ENCODE measurements at regions of chr5 and their contacts with region 1.

Region 1: GRCh38 chr5:168340487-168340886 is 49.0 kb downstream of the WWC1 start:
- DNase-seq: no peak
- H3K4me3 Mint-ChIP-seq: no peak overlapping the region
- H3K27ac Mint-ChIP-seq: no peak overlapping the region
- H3K4me1 Mint-ChIP-seq: no peaks in the 10 kb centered on the region
- H3K27me3 Mint-ChIP-seq: no peaks in the 10 kb centered on the region

Region 2: DNA sequence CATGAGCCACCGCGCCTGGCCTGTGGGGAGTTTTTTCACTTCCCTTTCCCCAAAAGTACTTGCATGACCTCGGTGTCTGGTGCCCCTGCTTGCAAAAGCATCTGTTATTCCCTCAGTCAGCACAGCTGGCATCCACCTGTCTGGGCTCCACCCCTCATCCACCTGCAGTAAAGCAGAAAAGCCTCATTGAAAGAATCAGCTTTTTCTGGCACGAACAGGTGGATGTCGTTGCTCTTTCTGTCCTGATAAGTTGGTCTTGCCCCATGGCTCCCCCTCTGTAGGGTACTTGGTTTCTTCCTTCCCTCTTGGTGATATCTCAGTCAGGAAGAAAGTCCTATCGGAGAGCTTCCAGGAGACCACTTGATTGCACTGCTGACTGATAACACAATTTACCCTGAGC is 11.7 kb before region 1 on chr5:
- CTCF ChIA-PET with region 1: no interaction called
- POLR2A ChIA-PET with region 1: no interaction called
- DNase-seq: no peak
- H3K4me3 Mint-ChIP-seq: no peak overlapping the region
- H3K27ac Mint-ChIP-seq: no peak overlapping the region
- H3K4me1 Mint-ChIP-seq: no peaks in the 10 kb centered on the region
- H3K27me3 Mint-ChIP-seq: peaks cover 29% of the 10 kb centered on the region

Region 3: DNA sequence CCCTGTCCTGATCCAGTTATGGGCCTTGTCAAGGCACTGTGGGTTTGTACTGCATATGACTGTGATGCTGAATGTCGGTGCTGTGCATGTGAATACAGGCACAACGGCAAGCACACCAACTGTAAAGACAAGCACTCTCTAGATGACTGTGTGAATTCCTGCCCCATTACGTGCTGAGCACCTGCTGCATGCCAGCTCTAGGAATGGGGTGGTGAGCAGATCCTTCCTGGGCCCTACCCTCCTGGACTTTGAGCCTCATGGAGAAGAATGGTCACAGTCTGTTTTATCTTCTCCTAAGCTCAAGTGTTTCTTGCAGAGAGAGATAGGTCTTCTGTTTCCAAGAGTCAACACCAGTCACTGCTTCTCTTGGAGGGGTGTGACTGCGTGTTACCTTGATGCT is 89.8 kb after region 1 on chr5:
- CTCF ChIA-PET with region 1: interaction called, 3 read pairs
- POLR2A ChIA-PET with region 1: interaction called, 12 read pairs
- DNase-seq: no peak
- H3K4me3 Mint-ChIP-seq: no peak overlapping the region
- H3K27ac Mint-ChIP-seq: no peak overlapping the region
- H3K4me1 Mint-ChIP-seq: no peaks in the 10 kb centered on the region
- H3K27me3 Mint-ChIP-seq: no peaks in the 10 kb centered on the region

Measured in activated CD4-positive, alpha-beta T cell treated with anti-CD3 and anti-CD28 coated beads, Interleukin-2, amount 10 ng/mL, durations not matched to agents 7 days and 5 days (primary cell).